PC-3 (cell line): ENCODE measurements at regions of chr7 and their contacts with region 1.

Region 1: DNA sequence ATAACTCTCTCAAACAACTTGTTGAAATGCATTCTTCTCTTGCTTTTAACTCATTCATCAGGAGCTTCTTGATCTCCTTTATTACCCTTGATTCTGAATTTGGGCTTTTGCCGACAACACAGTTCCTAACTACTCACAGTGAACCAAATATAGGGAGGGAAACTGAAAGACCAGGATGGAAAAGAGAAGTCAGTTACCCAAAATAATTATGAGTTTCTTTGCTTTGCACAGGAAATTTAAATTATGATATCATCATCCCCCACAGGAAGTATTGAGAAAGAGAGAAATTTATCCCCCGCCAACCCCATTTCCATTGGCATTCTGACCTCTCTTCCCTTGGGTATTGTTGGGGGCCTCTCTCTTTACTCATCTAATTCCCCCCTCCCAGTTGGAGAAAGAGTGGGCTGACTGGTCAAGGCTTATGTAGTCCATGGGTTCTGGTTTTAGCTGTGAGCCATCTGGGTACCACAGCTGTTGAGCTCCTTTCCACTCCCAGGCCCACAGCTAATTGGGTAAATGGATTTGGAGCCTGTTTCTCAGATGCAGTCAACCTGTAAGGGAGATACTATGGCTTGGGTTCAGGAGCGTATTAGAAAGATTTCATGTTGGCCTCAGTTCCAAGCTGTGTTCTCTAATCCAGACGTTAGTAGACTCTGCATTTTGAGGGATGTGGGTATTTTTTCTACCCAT is 109.0 kb downstream of the FZD1 start:
- DNase-seq: no peak
- ATAC-seq: no peak
- H3K4me3 ChIP-seq: no peak overlapping the region
- H3K27ac ChIP-seq: no peak overlapping the region
- H3K4me1 ChIP-seq: no peaks in the 10 kb centered on the region
- H3K27me3 ChIP-seq: no peaks in the 10 kb centered on the region; the same call in 1 of the 2 replicates
- CTCF ChIP-seq: no peak

Region 2: GRCh38 chr7:90917539-90917938 is 455.7 kb before region 1 on chr7:
- CTCF ChIA-PET with region 1: no interaction called
- POLR2A ChIA-PET with region 1: no interaction called
- intact Hi-C with region 1: no loop called
- DNase-seq: no peak
- ATAC-seq: no peak
- H3K4me3 ChIP-seq: no peak overlapping the region
- H3K27ac ChIP-seq: no peak overlapping the region
- H3K4me1 ChIP-seq: peaks cover 8% of the 10 kb centered on the region; the same call in 1 of the 2 replicates
- H3K27me3 ChIP-seq: no peaks in the 10 kb centered on the region
- CTCF ChIP-seq: no peak

Region 3: GRCh38 chr7:91353848-91354247 is 19.4 kb before region 1 on chr7:
- CTCF ChIA-PET with region 1: no interaction called
- POLR2A ChIA-PET with region 1: no interaction called
- intact Hi-C with region 1: no loop called
- DNase-seq: no peak
- ATAC-seq: no peak
- H3K4me3 ChIP-seq: no peak overlapping the region
- H3K27ac ChIP-seq: no peak overlapping the region
- H3K4me1 ChIP-seq: peaks cover 13% of the 10 kb centered on the region
- H3K27me3 ChIP-seq: no peaks in the 10 kb centered on the region
- CTCF ChIP-seq: no peak

Region 4: GRCh38 chr7:91405093-91405492 is 31.8 kb after region 1 on chr7:
- CTCF ChIA-PET with region 1: no interaction called
- POLR2A ChIA-PET with region 1: no interaction called
- intact Hi-C with region 1: no loop called
- DNase-seq: no peak
- ATAC-seq: no peak
- H3K4me3 ChIP-seq: no peak overlapping the region
- H3K27ac ChIP-seq: no peak overlapping the region
- H3K4me1 ChIP-seq: no peaks in the 10 kb centered on the region
- H3K27me3 ChIP-seq: peaks cover 8% of the 10 kb centered on the region
- CTCF ChIP-seq: no peak

Region 5: DNA sequence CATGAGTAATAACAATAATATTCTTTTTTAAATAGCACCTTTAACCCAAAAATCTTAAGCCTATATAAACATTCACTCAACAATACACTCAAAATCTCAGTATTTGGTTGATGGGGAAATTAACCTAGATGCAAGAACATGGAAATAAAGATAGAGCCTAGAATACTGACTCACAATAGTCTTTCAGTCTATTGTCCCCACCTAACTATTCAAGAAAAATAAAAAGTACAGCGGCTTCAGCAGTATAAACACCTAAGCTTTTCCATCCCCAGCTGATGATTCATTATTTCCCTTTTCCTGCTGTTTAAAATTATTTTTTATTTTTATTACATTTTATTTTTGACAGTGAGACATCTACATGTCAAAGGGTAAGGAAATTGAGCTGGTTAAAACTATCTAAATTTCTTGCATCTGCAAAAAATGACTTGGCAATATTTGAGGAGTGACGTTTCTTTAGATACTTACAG is 92.4 kb after region 1 on chr7:
- CTCF ChIA-PET with region 1: interaction called, 13 read pairs
- POLR2A ChIA-PET with region 1: no interaction called
- intact Hi-C with region 1: no loop called
- DNase-seq: peak; percentile 5
- ATAC-seq: peak; percentile 80
- H3K4me3 ChIP-seq: no peak overlapping the region
- H3K27ac ChIP-seq: no peak overlapping the region
- H3K4me1 ChIP-seq: peaks cover 5% of the 10 kb centered on the region; the same call in 1 of the 2 replicates
- H3K27me3 ChIP-seq: no peaks in the 10 kb centered on the region
- CTCF ChIP-seq: no peak